ENCODE measurements at regions of chr9 and their contacts with region 1.

Region 1: GRCh38 chr9:127785023-127785932 is 556 bp upstream of the CDK9 start:
- DNase-seq: peak; percentile 87
- H3K4me3 ChIP-seq: peak overlapping the region; percentile 75 to 98
- H3K27ac ChIP-seq: peak overlapping the region; percentile 80 to 95
- H3K4me1 ChIP-seq: peaks cover 46% of the 10 kb centered on the region
- H3K27me3 ChIP-seq: no peaks in the 10 kb centered on the region
- CTCF ChIP-seq: peak; percentile 94 to 97 (median 96)
- POLR2A ChIP-seq: no peak

Region 2: GRCh38 chr9:127869310-127870152 is 84.3 kb after region 1 on chr9:
- intact Hi-C with region 1: loop called (anchors 10 kb)
- DNase-seq: peak; percentile 92
- H3K4me3 ChIP-seq: no peak overlapping the region
- H3K27ac ChIP-seq: peak overlapping the region in 1 of 2 donors; percentile 83
- H3K4me1 ChIP-seq: peaks cover 44% of the 10 kb centered on the region
- H3K27me3 ChIP-seq: no peaks in the 10 kb centered on the region
- CTCF ChIP-seq: peak; percentile 75 to 94 (median 92)
- POLR2A ChIP-seq: no peak

Measured in testis (tissue), 5 donors.